OCI-LY7 (cell line): ENCODE measurements at regions of chr12 and their contacts with region 1.

Region 1: GRCh38 chr12:65182012-65182739 is 12.8 kb downstream of the LEMD3 start:
- DNase-seq: no peak
- H3K4me3 ChIP-seq: no peak overlapping the region
- H3K27ac ChIP-seq: no peak overlapping the region
- H3K4me1 ChIP-seq: peaks cover 1% of the 10 kb centered on the region
- CTCF ChIP-seq: no peak

Region 2: GRCh38 chr12:65195387-65196055 is 13.3 kb after region 1 on chr12:
- CTCF ChIA-PET with region 1: interaction called, 3 read pairs
- POLR2A ChIA-PET with region 1: interaction called, 20 read pairs
- intact Hi-C with region 1: no loop called
- DNase-seq: no peak
- H3K4me3 ChIP-seq: no peak overlapping the region
- H3K27ac ChIP-seq: no peak overlapping the region
- H3K4me1 ChIP-seq: peaks cover 19% of the 10 kb centered on the region
- CTCF ChIP-seq: no peak